ENCODE measurements at regions of chr2 and their contacts with region 1.

Region 1: DNA sequence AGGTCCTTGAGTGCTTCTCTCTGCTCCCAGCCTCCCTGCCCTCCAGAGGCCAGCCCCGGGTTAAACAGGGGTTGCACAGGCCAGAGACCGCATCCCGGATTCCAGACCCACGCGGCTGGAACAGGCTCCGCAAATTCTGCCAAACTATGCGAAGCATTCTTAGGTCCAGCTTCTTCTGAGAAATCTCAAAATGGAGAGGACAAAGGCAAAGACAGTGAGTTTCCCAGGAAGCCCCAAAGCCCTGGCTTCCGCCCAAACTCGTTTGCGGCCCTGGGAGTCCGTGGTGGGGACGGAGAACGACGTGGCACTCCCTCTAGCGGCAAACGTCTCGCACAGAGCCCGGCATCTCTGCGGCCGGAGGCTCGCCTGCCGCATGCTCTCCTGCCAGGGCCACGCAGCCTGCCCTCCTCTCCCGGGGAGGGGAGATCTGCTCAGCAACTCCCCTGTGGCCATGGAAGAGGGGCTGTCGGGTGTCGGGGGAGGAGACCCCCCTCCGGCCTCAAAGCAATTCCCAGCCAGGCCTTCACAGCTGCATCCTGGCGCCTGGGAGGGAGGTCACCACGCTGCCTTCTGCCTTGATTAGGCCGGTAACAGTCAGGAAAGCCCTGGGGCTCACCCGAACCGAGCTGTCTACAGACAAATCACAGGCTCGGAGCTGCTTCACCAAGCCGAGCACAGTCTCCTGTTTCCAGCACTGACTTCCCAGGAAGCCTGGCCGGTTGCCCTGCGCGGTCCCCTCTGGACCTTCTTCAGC is 33.4 kb upstream of the KLHL29 start:
- DNase-seq: peak; percentile 66
- ATAC-seq: peak; percentile 99
- H3K4me3 ChIP-seq: no peak overlapping the region
- H3K27ac ChIP-seq: no peak overlapping the region
- H3K4me1 ChIP-seq: no peaks in the 10 kb centered on the region
- H3K27me3 ChIP-seq: peaks cover 18% of the 10 kb centered on the region
- CTCF ChIP-seq: peak; percentile 82
- POLR2A ChIP-seq: no peak
- RAD21 ChIP-seq: peak; percentile 80

Region 2: GRCh38 chr2:23320058-23320457 is 31.5 kb before region 1 on chr2:
- CTCF ChIA-PET with region 1: no interaction called
- POLR2A ChIA-PET with region 1: no interaction called
- dilution Hi-C with region 1: no loop called
- in situ Hi-C with region 1: no loop called
- intact Hi-C with region 1: no loop called
- DNase-seq: no peak
- ATAC-seq: no peak
- H3K4me3 ChIP-seq: no peak overlapping the region
- H3K27ac ChIP-seq: no peak overlapping the region
- H3K4me1 ChIP-seq: no peaks in the 10 kb centered on the region
- H3K27me3 ChIP-seq: peaks cover 14% of the 10 kb centered on the region
- CTCF ChIP-seq: no peak
- POLR2A ChIP-seq: no peak
- RAD21 ChIP-seq: no peak

Region 3: DNA sequence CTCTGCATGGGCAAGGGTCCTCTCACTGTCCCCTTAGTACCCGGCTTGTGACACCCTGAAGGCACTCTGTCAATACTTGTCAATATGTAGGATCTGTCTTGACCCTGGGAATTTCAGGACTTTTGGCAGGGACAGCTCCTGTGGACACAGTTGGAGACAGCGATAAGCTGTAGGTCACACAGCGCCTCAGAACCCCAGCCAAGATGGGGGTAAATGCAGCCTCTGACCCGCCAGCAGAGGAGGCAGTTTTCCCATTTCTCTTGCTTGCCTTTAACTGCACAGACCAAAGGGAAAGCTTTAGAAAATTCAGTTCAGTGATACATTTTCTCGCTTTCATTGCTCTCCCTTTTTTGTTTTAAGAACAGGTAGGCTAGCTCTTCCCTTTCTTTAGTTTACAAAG is 21.4 kb before region 1 on chr2:
- CTCF ChIA-PET with region 1: no interaction called
- POLR2A ChIA-PET with region 1: no interaction called
- dilution Hi-C with region 1: no loop called
- in situ Hi-C with region 1: no loop called
- intact Hi-C with region 1: no loop called
- DNase-seq: peak; percentile 20
- ATAC-seq: peak; percentile 53; the same call in 1 of the 2 replicates
- H3K4me3 ChIP-seq: no peak overlapping the region
- H3K27ac ChIP-seq: no peak overlapping the region
- H3K4me1 ChIP-seq: no peaks in the 10 kb centered on the region
- H3K27me3 ChIP-seq: peaks cover 15% of the 10 kb centered on the region; the same call in 1 of the 2 replicates
- CTCF ChIP-seq: peak; percentile 18; the same call in 1 of the 2 replicates
- POLR2A ChIP-seq: no peak
- RAD21 ChIP-seq: peak; percentile 25; the same call in 1 of the 2 replicates

Region 4: GRCh38 chr2:23460228-23460627 is 108.7 kb after region 1 on chr2:
- CTCF ChIA-PET with region 1: no interaction called
- POLR2A ChIA-PET with region 1: no interaction called
- dilution Hi-C with region 1: no loop called
- in situ Hi-C with region 1: no loop called
- intact Hi-C with region 1: loop called (anchors 1 kb)
- DNase-seq: peak; percentile 47
- ATAC-seq: peak; percentile 63; the same call in 1 of the 2 replicates
- H3K4me3 ChIP-seq: no peak overlapping the region
- H3K27ac ChIP-seq: no peak overlapping the region
- H3K4me1 ChIP-seq: peaks cover 11% of the 10 kb centered on the region
- H3K27me3 ChIP-seq: no peaks in the 10 kb centered on the region
- CTCF ChIP-seq: peak; percentile 64
- POLR2A ChIP-seq: no peak
- RAD21 ChIP-seq: peak; percentile 75